ENCODE measurements at regions of chr13 and their contacts with region 1.

Region 1: GRCh38 chr13:51269039-51269438 is 46.8 kb downstream of the FAM124A start:
- DNase-seq: no peak
- ATAC-seq: no peak
- H3K4me3 ChIP-seq: no peak overlapping the region
- H3K27ac ChIP-seq: no peak overlapping the region
- H3K4me1 ChIP-seq: peaks cover 0 to 33% (median 9%) of the 10 kb centered on the region in 12 donors
- H3K27me3 ChIP-seq: no peaks in the 10 kb centered on the region
- CTCF ChIP-seq: no peak
- POLR2A ChIP-seq: no peak

Region 2: GRCh38 chr13:51230477-51231105 is 38.4 kb before region 1 on chr13:
- intact Hi-C with region 1: loop called in 1 of 10 experiments (anchors 5 kb)
- DNase-seq: peak in 4 of 5 donors; percentile 59 to 67 (median 62)
- ATAC-seq: peak; percentile 49 to 95 (median 90)
- H3K4me3 ChIP-seq: peak overlapping the region in 10 of 12 donors; percentile 9 to 44 (median 26)
- H3K27ac ChIP-seq: peak overlapping the region; percentile 3 to 82 (median 59)
- H3K4me1 ChIP-seq: peaks cover 0 to 27% (median 19%) of the 10 kb centered on the region in 12 donors
- H3K27me3 ChIP-seq: no peaks in the 10 kb centered on the region
- CTCF ChIP-seq: no peak
- POLR2A ChIP-seq: no peak

Region 3: DNA sequence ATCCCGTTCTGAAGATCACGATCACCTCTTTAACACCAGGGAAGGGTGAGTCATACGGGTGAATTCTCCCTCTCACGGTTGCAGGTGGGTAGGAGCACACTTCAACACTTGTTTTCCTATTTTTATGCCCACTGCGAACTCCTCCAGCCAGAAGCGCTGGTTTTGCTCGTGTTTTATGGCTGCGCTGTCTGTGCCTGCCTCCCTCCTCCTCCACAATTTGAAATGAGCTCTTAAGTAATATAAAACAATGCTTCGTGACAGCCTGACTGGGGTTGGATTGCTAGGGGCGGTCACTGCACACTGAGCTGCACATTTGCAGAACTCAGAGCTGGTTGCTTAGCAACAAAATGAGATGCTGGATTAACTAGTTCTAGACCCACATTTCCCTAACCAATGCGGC is 605.6 kb after region 1 on chr13:
- intact Hi-C with region 1: no loop called
- DNase-seq: no peak
- ATAC-seq: no peak
- H3K4me3 ChIP-seq: no peak overlapping the region
- H3K27ac ChIP-seq: no peak overlapping the region
- H3K4me1 ChIP-seq: peaks cover 0 to 5% (median 0%) of the 10 kb centered on the region in 12 donors
- H3K27me3 ChIP-seq: no peaks in the 10 kb centered on the region
- CTCF ChIP-seq: no peak
- POLR2A ChIP-seq: no peak